PC-9 (cell line): ENCODE measurements at regions of chr1 and their contacts with region 1.

Region 1: DNA sequence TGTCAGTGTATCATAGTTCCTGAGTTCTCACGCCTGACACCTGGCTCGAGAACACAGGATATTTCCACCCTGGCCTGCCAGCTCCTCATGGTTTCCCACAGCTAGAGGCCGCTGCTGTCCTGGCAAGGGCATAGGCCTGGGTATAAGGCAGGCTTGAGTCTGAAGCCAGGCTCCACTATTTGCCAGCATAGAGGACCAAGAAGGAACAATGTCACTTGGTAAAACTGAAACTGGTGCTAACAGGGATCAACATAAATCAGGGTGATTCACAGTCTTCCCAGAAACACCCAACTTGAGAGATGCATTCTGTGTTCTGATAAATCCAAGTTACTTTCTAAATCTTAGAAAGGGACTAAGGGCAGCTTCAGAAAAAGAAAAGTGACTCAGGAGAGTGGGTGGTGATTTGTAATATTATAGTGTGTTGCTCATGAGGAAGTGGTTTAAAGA is 6.9 kb upstream of the S100A2 start:
- DNase-seq: peak; percentile 81 to 84
- H3K4me3 ChIP-seq: no peak overlapping the region
- H3K27ac ChIP-seq: peak overlapping the region; percentile 75
- H3K4me1 ChIP-seq: peaks cover 29% of the 10 kb centered on the region
- H3K27me3 ChIP-seq: no peaks in the 10 kb centered on the region
- CTCF ChIP-seq: peak; percentile 91

Region 2: DNA sequence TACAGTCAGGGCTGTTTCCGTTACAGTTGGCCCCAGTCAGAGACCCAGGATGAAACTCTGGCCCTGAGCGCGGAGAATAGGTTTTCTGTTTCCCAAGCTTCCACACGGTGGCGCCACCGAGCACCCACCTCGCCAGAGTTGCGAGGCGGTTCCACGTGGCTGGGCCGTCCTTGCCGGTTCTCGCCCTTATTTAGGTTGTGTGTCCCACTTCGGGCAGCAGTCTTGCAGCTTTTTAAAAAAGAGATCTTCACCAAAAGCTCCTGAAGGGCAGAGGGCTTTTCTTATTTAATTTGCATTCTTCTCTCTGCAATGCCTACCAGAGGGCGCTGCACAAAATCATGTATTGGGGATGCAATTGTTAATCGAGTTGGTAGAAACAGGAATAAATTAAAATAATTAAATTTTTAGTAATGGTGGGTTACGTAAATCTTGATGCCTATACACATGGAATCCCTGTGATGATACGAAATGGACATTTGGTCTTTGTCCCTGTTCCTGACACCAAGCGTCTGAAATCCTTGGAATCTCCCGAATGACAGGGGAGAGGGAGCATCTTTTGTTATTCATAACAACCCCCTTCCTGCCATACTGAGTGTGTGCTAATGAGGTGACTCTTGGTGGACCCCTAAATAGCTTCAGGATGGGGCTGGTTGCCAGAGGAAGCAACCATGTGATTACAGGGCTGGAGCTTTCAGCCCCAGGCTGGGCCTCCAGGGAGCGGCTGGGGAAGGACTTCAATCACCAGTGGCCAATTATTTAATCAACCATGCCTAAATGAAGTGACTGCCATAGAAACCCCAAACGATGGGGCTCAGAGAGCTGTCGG is 106.6 kb before region 1 on chr1:
- CTCF ChIA-PET with region 1: no interaction called
- POLR2A ChIA-PET with region 1: no interaction called
- intact Hi-C with region 1: no loop called
- DNase-seq: peak; percentile 35 to 36
- H3K4me3 ChIP-seq: no peak overlapping the region
- H3K27ac ChIP-seq: no peak overlapping the region
- H3K4me1 ChIP-seq: no peaks in the 10 kb centered on the region
- H3K27me3 ChIP-seq: no peaks in the 10 kb centered on the region
- CTCF ChIP-seq: peak; percentile 79

Region 3: DNA sequence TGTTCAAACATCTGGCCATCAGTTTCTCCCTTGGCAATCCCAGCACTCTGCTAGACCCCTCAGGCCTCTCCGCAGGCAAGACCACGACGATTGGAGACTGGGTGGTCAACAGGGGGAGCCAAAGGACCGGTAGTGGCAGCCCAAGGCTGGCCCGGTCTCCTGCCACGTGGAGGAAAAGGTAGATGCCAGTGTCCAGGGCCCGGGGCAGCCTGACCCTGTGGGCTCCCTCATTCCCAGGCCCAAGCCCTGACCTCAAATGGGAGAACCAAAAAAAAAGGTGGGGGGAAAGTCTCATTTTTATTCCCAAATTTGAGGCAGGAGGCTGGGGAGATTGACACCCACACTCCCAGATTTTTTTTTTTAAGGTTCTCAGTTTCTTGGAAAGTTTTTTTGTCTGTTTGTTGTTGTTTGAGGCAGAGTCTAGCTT is 61.6 kb before region 1 on chr1:
- CTCF ChIA-PET with region 1: interaction called, 13 read pairs
- POLR2A ChIA-PET with region 1: interaction called, 11 read pairs
- intact Hi-C with region 1: loop called (anchors 1 kb)
- DNase-seq: peak; percentile 52 to 82
- H3K4me3 ChIP-seq: no peak overlapping the region
- H3K27ac ChIP-seq: no peak overlapping the region
- H3K4me1 ChIP-seq: peaks cover 51% of the 10 kb centered on the region
- H3K27me3 ChIP-seq: no peaks in the 10 kb centered on the region
- CTCF ChIP-seq: peak; percentile 96

Region 4: GRCh38 chr1:153608742-153609584 is 36.4 kb after region 1 on chr1:
- CTCF ChIA-PET with region 1: interaction called, 8 read pairs
- POLR2A ChIA-PET with region 1: interaction called, 3 read pairs
- intact Hi-C with region 1: loop called (anchors 1 kb)
- DNase-seq: peak; percentile 94 to 98
- H3K4me3 ChIP-seq: peak overlapping the region; percentile 56
- H3K27ac ChIP-seq: peak overlapping the region; percentile 96
- H3K4me1 ChIP-seq: peaks cover 52% of the 10 kb centered on the region
- H3K27me3 ChIP-seq: no peaks in the 10 kb centered on the region
- CTCF ChIP-seq: no peak; the same call in 1 of the 2 replicates

Region 5: DNA sequence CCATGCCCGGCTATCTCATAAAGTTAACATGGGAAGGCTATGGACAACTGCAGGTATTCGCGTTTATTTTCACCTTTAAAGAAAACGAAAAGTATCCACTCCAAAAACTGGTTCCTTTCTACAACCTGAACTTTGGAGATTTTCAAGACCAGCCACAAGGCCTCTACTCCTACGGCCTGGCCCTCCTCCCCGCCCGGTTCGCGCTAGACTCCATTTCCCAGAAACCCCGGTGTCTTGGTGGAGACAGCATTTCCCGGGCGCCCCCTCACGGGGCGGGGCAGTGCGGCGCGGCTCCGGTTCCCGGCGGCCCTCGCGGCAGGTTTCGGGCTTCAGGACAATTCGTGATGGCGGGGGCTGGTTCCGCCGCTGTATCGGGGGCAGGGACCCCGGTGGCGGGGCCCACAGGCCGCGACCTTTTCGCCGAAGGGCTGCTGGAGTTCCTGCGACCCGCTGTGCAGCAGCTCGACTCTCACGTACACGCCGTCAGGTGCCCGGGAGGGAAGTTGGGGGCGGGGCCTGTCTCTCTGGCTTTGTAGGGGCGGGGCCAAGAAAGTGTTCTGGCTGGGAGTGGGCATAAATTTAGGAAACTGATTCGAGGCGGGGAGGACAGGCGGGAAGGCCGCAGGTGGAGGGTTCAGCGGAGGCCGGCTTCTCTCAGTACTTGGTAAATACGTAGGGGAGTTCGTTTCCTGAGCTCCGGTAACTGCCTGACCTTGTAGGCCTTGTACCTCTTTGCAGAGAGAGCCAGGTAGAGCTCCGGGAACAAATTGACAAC is 86.0 kb after region 1 on chr1 and contains the start of gene SNAPIN:
- CTCF ChIA-PET with region 1: no interaction called
- POLR2A ChIA-PET with region 1: no interaction called
- intact Hi-C with region 1: loop called (anchors 5 kb)
- DNase-seq: peak; percentile 77 to 91
- H3K4me3 ChIP-seq: peak within 1 kb of the TSS; percentile 72
- H3K27ac ChIP-seq: peak within 1 kb of the TSS; percentile 55
- H3K4me1 ChIP-seq: peaks cover 6% of the 10 kb centered on the region
- H3K27me3 ChIP-seq: no peaks in the 10 kb centered on the region
- CTCF ChIP-seq: peak; percentile 41; the same call in 1 of the 2 replicates
- total RNA-seq, gene SNAPIN: 25.4 and 29.5 TPM in 2 replicates

Region 6: DNA sequence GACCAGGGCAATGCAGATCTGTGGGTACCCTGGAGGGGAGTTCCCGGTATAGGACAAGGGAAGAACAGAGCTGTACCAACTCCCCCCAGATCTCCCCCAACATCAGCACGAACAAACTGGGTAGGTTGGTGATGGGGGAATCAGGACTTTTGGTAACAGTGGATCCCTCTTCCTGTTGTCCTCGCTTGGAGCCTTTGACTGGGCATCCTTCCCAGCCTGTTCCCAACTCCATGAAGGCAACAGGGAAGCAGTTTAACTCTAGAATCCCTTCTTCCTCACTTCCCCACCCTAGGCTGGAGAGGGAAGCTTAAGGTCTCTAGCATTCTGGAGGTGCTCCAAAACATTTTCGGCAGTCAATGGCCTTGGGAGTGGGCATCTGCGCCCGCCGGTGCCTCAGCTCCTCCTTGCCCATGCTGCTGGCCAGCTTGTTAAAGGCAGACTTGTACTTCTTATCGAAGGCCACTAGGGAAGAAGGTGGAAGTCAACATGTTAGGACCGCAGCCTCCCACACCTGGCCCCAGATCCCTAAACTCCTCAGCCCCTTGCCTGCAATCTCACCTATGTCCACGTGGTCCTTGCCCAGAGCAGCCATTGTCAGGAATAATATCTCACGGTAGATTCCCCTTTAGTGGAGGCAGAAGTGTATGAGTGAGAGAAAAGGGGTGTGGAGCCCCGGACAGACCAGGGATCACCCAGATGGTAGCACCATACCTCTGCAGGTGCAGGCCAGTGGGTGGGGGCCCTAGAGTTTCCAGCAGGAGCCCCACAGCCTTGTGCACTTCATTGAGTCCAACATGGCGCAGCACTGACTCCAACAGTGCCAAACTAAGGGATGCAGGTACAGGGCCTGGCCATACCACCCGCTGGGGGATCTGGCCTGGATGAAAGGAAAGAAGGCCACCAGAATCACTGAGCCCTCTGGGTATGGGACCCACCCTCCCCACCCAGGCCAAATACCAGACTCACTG is 357.7 kb after region 1 on chr1:
- CTCF ChIA-PET with region 1: interaction called, 12 read pairs
- POLR2A ChIA-PET with region 1: no interaction called
- intact Hi-C with region 1: no loop called
- DNase-seq: no peak
- H3K4me3 ChIP-seq: no peak overlapping the region
- H3K27ac ChIP-seq: no peak overlapping the region
- H3K4me1 ChIP-seq: no peaks in the 10 kb centered on the region
- H3K27me3 ChIP-seq: no peaks in the 10 kb centered on the region
- CTCF ChIP-seq: no peak